Common myeloid progenitor, CD34-positive (primary cell): ENCODE measurements at regions of chr9 and their contacts with region 1.

Region 1: DNA sequence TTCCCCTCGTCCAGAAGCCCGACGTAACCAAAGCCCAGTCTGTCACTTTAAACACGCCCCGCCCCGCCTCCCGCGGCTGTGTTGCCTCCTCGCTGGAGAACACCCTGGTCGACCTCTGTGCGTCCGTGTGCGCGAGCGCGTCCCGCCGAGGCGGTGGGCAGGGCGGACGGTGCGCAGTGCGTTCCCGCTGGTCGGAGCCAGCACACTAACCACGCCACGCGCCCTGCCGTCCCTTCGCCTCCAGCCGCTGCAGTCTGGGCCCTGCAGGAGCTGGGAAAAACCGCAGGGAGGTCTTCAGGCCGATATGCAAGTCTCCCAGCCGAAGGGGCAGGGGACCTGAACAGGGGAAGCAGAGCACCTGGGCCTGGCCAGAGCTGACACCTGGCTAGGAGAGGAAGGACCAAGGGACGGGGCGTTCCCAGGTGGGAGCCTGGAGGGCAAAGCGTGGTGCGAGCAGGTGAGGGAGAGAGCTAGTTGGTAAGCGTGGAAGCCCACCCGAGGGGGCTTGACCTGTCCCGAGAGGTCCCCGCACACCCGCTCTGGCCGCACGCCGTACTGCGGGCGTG is 1.3 kb upstream of the PHPT1 start:
- DNase-seq: peak; percentile 37 to 61 (median 60)
- H3K4me3 ChIP-seq: peak overlapping the region in 6 of 7 experiments; percentile 2 to 96 (median 72)
- H3K27ac ChIP-seq: peak overlapping the region in 1 of 2 experiments; percentile 82
- H3K4me1 ChIP-seq: peaks cover 0 to 53% (median 45%) of the 10 kb centered on the region in 4 experiments
- H3K27me3 ChIP-seq: peaks cover 0 to 50% (median 10%) of the 10 kb centered on the region in 5 experiments

Region 2: DNA sequence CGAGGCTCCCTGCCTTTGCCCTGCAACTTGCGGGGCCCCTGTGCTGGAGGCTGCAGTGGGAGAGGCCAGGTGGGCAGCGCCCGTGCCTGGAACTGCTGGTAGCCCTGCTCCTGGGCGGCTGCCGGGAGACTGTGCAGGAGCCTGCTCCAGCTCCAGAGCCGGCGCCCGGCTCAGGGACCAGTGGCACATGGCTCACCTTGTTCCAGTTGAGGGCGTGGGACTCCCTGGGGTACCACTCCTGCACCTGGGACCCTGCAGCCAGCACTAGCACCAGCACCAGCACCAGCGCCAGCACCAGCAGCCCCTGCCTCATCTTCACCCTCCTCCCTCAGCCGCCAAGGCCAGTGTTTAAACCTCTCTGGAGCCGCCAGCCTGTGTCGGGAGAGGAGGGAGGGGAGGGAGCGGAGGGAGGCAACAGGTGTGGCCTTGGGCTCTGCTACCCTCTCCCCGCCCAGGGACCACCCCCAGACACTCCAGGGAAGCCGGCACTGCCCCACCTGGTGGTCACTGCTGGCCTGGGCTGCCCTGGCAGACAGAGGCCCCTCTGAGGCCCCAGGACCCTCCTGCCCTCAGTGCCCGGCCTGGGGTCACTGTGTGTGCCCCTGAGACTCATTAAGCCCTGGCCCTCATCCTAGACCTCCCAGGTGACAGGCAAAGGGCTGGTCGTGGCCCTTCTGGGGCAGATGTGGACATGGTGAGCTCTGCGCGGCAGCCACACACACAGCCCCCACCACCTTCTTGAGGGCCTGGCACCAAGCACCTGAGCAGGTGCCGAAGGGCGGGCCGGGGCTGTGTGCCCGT is 105.1 kb before region 1 on chr9 and contains the start of gene LCN10:
- CTCF ChIA-PET with region 1: no interaction called
- POLR2A ChIA-PET with region 1: no interaction called
- DNase-seq: no peak
- H3K4me3 ChIP-seq: peak within 1 kb of the TSS in 5 of 7 experiments; percentile 1 to 59 (median 36)
- H3K27ac ChIP-seq: no peak within 1 kb of the TSS
- H3K4me1 ChIP-seq: peaks cover 0 to 46% (median 33%) of the 10 kb centered on the region in 4 experiments
- H3K27me3 ChIP-seq: peaks cover 0 to 2% (median 0%) of the 10 kb centered on the region in 5 experiments

Region 3: DNA sequence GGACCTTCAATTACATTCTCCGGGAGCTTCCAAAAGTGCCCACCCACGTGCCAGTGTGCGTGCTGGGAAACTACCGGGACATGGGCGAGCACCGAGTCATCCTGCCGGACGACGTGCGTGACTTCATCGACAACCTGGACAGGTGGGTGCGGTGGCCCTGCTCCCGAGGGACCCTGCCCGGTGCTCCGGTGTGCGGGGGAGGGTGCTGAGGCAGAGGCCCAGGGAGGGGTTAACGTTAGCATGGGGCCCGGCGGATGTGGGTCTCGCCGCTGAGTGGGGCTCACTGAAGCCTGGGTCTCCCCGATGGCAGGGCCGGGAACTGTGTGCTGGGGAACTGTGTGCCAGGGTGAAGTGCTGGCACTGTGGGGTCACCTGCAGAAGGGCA is 16.2 kb before region 1 on chr9:
- CTCF ChIA-PET with region 1: interaction called, 13 read pairs
- POLR2A ChIA-PET with region 1: interaction called, 6 read pairs
- DNase-seq: no peak
- H3K4me3 ChIP-seq: no peak overlapping the region
- H3K27ac ChIP-seq: no peak overlapping the region
- H3K4me1 ChIP-seq: no peaks in the 10 kb centered on the region
- H3K27me3 ChIP-seq: no peaks in the 10 kb centered on the region

Region 4: GRCh38 chr9:136882109-136882946 is 34.4 kb after region 1 on chr9:
- CTCF ChIA-PET with region 1: interaction called, 22 read pairs
- POLR2A ChIA-PET with region 1: no interaction called
- DNase-seq: peak; percentile 83 to 94 (median 93)
- H3K4me3 ChIP-seq: peak overlapping the region; percentile 5 to 67 (median 51)
- H3K27ac ChIP-seq: peak overlapping the region in 1 of 2 experiments; percentile 54
- H3K4me1 ChIP-seq: peaks cover 0 to 37% (median 32%) of the 10 kb centered on the region in 4 experiments
- H3K27me3 ChIP-seq: no peaks in the 10 kb centered on the region

Region 5: GRCh38 chr9:137176302-137177182 is 328.6 kb after region 1 on chr9:
- CTCF ChIA-PET with region 1: no interaction called
- POLR2A ChIA-PET with region 1: no interaction called
- DNase-seq: peak in 2 of 3 donors; percentile 49 to 55
- H3K4me3 ChIP-seq: no peak overlapping the region
- H3K27ac ChIP-seq: no peak overlapping the region
- H3K4me1 ChIP-seq: peaks cover 0 to 32% (median 21%) of the 10 kb centered on the region in 4 experiments
- H3K27me3 ChIP-seq: peaks cover 0 to 4% (median 0%) of the 10 kb centered on the region in 5 experiments